Colonic mucosa (tissue), 4 donors: ENCODE measurements at regions of chr22 and their contacts with region 1.

Region 1: GRCh38 chr22:32655068-32655467 is 146.4 kb upstream of the TIMP3 start:
- DNase-seq: no peak
- H3K4me3 ChIP-seq: no peak overlapping the region
- H3K27ac ChIP-seq: no peak overlapping the region
- H3K4me1 ChIP-seq: no peaks in the 10 kb centered on the region
- H3K27me3 ChIP-seq: no peaks in the 10 kb centered on the region
- CTCF ChIP-seq: no peak

Region 2: DNA sequence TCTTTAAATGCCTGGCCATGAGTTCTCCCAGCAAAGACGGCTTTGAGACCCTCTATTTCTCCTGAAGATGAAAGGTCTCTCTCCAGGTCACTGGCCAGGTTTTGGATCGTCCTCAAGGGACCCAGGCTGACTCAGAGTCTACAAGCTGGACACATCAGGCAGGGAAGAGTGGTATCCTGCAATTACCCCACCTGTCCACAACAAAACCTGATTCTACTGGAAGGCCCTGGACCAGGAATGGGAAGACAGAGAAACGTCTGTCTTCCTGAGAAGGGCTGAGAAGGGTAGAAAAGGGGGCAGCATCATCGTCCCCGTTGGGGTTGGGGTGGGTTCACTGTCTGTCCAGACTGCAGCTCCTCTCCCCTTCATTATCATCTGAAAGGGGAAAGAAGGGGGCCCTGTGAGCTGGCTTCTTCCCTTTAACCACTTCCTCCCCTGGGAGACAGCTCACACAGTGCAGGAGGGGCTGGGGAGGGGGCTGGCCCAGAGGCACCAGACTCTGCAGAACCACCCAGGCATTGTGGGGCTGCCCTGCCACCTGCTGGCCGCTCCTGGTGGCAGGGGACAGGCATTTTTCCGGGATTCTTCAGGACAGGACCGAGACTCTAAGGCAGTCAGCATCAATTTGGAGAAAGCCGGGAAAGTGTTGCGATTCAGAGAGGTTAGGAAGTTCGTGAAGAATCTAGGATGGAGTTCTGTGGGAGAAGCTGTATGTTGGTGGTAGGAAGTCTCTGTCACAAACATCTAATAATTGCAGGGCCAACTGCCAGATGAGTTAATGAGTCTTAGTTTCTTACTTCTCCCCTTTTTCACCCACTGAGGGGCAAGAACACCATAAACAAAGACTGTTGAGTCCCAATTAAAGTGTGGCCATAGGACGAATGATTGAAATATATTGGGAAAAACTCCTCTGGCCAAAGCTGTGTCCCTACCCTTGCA is 345.5 kb after region 1 on chr22:
- intact Hi-C with region 1: loop called (anchors 5 kb)
- DNase-seq: peak; percentile 34
- H3K4me3 ChIP-seq: no peak overlapping the region
- H3K27ac ChIP-seq: no peak overlapping the region
- H3K4me1 ChIP-seq: no peaks in the 10 kb centered on the region
- H3K27me3 ChIP-seq: no peaks in the 10 kb centered on the region
- CTCF ChIP-seq: peak; percentile 84